ENCODE measurements at regions of chr20 and their contacts with region 1.

Region 1: GRCh38 chr20:17796091-17796563 is 96.4 kb downstream of the BANF2 start:
- DNase-seq: peak in 1 of 2 donors; percentile 73
- ATAC-seq: peak; percentile 90
- H3K4me3 ChIP-seq: no peak overlapping the region
- H3K27ac ChIP-seq: peak overlapping the region; percentile 35 to 50
- H3K4me1 ChIP-seq: no peaks in the 10 kb centered on the region
- H3K27me3 ChIP-seq: no peaks in the 10 kb centered on the region

Region 2: GRCh38 chr20:17835240-17835935 is 39.3 kb after region 1 on chr20:
- intact Hi-C with region 1: loop called (anchors 5 kb)
- DNase-seq: peak; percentile 85 to 92
- ATAC-seq: peak; percentile 63
- H3K4me3 ChIP-seq: no peak overlapping the region
- H3K27ac ChIP-seq: peak overlapping the region in 1 of 2 donors; percentile 57
- H3K4me1 ChIP-seq: peaks cover 0 to 1% of the 10 kb centered on the region in 2 donors
- H3K27me3 ChIP-seq: no peaks in the 10 kb centered on the region

Region 3: DNA sequence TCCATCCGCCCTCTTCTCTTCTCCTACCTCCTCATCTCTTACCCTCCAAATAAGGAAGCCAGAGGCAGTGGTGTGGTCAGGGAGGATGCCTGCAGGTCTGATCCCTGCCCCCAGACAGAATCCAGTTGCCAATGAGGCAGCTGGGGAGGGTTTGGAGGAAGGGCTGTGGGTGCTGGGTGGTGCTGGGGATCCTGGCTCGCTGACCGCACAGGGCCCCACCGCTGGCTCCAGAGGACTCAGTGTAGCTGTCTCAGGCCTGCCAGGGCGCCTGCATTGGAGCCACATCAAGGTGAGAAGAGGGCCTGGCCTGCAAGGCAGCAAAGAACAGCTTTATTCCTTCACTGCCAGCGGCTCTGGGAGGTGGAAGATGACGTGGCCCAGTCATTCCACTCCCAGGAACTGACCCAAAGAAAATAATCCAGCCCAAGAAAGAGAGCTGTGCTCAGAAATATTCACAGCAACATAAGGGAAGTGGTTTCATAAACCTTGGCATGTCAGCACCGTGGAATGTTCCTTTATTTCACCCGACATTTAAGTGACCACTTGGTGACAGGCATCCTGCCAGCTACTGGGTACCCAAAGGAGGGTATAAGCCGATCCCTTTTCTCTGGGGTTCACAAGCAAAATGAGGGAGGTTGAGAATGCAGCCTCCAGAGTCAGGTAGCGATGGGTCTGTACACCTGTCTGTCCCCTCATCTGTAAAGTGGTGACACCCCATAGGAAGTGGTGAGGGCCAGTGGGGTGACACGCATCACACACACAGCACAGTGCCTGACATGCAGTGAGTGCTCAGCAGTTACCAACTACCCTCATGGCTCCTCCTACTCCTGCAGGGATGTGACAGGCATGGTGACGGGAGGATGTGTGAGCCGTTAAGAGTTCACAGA is 47.4 kb after region 1 on chr20:
- intact Hi-C with region 1: loop called (anchors 5 kb)
- DNase-seq: peak; percentile 82 to 86
- ATAC-seq: peak; percentile 80
- H3K4me3 ChIP-seq: no peak overlapping the region
- H3K27ac ChIP-seq: peak overlapping the region; percentile 7 to 98
- H3K4me1 ChIP-seq: no peaks in the 10 kb centered on the region
- H3K27me3 ChIP-seq: no peaks in the 10 kb centered on the region

Measured in aorta (tissue), 5 donors.